Endothelial cell of umbilical vein (primary cell): ENCODE measurements at regions of chr14 and their contacts with region 1.

Region 1: DNA sequence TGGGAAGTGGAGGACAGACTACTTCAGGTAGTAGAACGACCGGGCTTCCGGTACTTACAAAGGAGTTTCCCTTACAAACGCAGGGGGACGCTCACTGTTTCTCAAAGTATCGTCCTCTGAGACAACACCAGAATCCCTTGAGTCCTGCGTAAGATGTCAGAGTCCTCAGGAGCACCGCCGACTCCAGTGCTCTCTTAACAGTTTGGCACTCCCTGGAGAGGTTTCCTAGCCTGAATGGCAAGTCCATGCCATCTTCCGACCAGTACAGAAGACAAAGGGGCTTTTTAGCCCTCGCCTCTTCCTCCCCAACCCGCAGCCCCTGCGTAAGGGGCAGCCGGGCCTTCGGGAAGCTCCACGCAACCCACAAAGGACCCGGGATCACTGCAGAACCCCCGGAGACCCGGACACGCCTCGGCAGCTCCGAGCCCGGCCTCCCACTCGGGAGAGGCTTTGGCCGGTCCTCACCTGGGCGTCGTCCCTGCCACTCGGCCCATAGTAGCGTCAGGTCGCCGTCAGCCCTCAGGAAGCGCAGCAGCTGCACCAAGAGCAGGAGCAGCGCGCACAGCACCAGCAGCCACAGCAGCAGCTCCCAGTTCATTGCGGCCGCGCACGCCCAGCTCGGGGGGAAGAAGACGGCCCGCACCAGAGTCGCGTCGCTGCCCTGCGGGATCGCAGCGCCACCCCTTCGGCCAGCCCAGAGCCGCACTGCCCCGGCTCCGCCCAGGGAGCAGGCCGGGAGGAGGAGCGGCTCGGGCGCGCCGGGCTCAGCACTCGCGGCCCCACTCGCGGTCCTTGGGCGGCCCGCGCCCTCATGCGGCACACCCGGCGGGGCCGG is at the start of gene DHRS7:
- DNase-seq: peak; percentile 82
- H3K4me3 ChIP-seq: peak within 1 kb of the TSS; percentile 46 to 84 (median 79)
- H3K27ac ChIP-seq: peak within 1 kb of the TSS; percentile 22
- H3K4me1 ChIP-seq: peaks cover 10% of the 10 kb centered on the region
- H3K27me3 ChIP-seq: no peaks in the 10 kb centered on the region
- CTCF ChIP-seq: peak; percentile 12 to 21
- POLR2A ChIP-seq: peak; percentile 59
- total RNA-seq, gene DHRS7: 29.3 and 35.7 TPM in 2 replicates

Region 2: GRCh38 chr14:59849411-59850130 is 315.4 kb before region 1 on chr14:
- CTCF ChIA-PET with region 1: no interaction called
- POLR2A ChIA-PET with region 1: no interaction called
- dilution Hi-C with region 1: no loop called
- intact Hi-C with region 1: no loop called
- DNase-seq: no peak
- H3K4me3 ChIP-seq: no peak overlapping the region
- H3K27ac ChIP-seq: no peak overlapping the region
- H3K4me1 ChIP-seq: no peaks in the 10 kb centered on the region
- H3K27me3 ChIP-seq: no peaks in the 10 kb centered on the region
- CTCF ChIP-seq: no peak
- POLR2A ChIP-seq: no peak

Region 3: DNA sequence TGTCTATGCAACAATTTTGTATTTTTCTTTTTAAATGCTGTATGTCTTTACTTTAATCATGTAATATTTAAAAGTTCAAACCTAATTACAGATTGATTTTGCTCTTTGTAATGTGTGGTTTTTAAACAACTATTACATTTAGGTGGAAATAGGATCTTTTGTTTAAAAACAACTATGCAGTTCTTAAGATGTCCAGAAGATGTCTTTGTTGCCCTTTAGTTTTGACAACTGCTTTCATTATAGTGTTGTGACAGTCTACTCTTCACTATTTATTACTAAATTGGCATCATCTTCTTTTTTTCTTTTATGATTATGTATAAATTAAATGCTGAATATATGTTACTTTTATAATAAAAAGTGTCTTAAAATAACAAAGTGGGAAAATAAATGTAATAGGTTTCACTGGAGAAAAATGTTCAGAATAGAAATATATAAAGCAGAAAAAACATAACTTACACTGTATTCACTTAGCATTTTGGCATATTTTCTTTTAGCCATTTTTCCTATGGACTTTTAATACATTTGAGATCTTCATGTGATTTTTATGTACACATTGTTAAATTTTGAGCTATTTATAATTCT is 100.3 kb before region 1 on chr14:
- CTCF ChIA-PET with region 1: interaction called, 29 read pairs
- POLR2A ChIA-PET with region 1: no interaction called
- dilution Hi-C with region 1: no loop called
- intact Hi-C with region 1: loop called (anchors 5 kb)
- DNase-seq: peak; percentile 48
- H3K4me3 ChIP-seq: no peak overlapping the region
- H3K27ac ChIP-seq: no peak overlapping the region
- H3K4me1 ChIP-seq: no peaks in the 10 kb centered on the region
- H3K27me3 ChIP-seq: peaks cover 0 to 2% of the 10 kb centered on the region in 2 experiments
- CTCF ChIP-seq: peak; percentile 18 to 25
- POLR2A ChIP-seq: no peak

Region 4: GRCh38 chr14:60091550-60092530 is 73.1 kb before region 1 on chr14 and contains the start of gene PCNX4:
- CTCF ChIA-PET with region 1: interaction called, 8 read pairs
- POLR2A ChIA-PET with region 1: no interaction called
- dilution Hi-C with region 1: no loop called
- intact Hi-C with region 1: loop called (anchors 1 kb)
- DNase-seq: peak; percentile 99
- H3K4me3 ChIP-seq: peak within 1 kb of the TSS; percentile 68 to 86 (median 86)
- H3K27ac ChIP-seq: peak within 1 kb of the TSS; percentile 93
- H3K4me1 ChIP-seq: peaks cover 25% of the 10 kb centered on the region
- H3K27me3 ChIP-seq: no peaks in the 10 kb centered on the region
- CTCF ChIP-seq: no peak
- POLR2A ChIP-seq: peak; percentile 96
- total RNA-seq, gene PCNX4: 41.4 and 51.6 TPM in 2 replicates

Region 5: DNA sequence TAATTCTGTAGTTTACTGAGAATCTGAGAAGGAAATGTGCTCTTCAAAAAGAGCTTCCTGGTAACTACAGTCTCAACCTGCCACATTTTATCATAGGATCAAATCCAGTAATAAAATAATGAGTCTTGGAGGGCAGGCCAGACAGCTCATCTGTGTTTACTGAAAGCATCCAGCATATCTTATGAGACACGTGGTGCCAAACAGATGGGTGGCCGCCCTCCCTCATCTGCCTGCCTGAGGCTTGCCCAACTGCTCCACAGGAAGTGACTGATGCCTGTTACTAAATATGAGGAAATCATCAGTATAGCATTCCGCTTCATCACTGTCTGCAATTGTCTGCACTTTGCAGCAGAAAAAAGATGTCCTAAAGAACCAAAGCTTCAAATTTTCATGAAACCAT is 13.2 kb before region 1 on chr14:
- CTCF ChIA-PET with region 1: interaction called, 12 read pairs
- POLR2A ChIA-PET with region 1: no interaction called
- dilution Hi-C with region 1: no loop called
- intact Hi-C with region 1: no loop called
- DNase-seq: peak; percentile 53
- H3K4me3 ChIP-seq: no peak overlapping the region
- H3K27ac ChIP-seq: peak overlapping the region; percentile 50
- H3K4me1 ChIP-seq: peaks cover 18% of the 10 kb centered on the region
- H3K27me3 ChIP-seq: no peaks in the 10 kb centered on the region
- CTCF ChIP-seq: no peak
- POLR2A ChIP-seq: no peak